Activated naive CD4-positive, alpha-beta T cell treated with anti-CD3 and anti-CD28 coated beads for 36 hours (primary cell): ENCODE measurements at regions of chr1 and their contacts with region 1.

Region 1: DNA sequence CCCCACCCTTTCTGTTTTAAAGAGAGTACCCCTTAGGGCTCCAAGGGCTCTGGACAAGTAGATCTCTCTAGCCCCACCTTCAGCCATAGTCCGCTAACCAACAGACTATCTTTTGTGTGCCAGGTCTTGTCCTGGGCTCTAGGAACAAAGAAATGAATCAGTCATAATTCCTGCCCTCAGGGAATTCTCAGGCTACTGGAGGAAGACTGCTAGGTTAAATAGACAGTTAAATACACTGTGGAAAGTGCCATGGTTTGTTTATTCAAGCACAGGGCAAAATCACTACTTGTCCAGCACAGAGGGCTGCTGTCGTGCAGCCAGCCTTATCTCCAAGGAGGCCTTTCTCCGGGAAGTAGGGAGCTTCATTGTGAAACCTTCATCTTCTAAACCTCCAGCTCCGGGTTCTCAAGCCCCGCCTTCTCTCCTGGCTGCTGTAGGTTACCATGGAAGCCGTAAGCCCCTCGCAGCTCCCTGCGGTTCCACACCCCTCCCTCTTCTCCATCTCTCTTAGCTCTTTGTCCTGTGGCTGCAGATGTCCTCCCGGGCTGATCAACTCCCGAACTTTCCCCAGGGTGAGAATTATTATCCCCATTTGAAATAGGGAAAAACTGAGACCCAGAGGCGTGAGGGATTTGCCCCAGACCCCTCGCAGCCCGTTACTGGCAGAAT is 29.8 kb downstream of the SHISAL2A start:
- DNase-seq: no peak
- H3K4me3 Mint-ChIP-seq: no peak overlapping the region
- H3K27ac Mint-ChIP-seq: peak overlapping the region; percentile 71
- H3K4me1 Mint-ChIP-seq: peaks cover 16% of the 10 kb centered on the region
- H3K27me3 Mint-ChIP-seq: no peaks in the 10 kb centered on the region

Region 2: GRCh38 chr1:52127181-52128180 is 535.3 kb before region 1 on chr1:
- CTCF ChIA-PET with region 1: no interaction called
- intact Hi-C with region 1: loop called (anchors 1 kb)
- DNase-seq: peak; percentile 59
- H3K4me3 Mint-ChIP-seq: no peak overlapping the region
- H3K27ac Mint-ChIP-seq: no peak overlapping the region
- H3K4me1 Mint-ChIP-seq: peaks cover 16% of the 10 kb centered on the region
- H3K27me3 Mint-ChIP-seq: peaks cover 11% of the 10 kb centered on the region

Region 3: GRCh38 chr1:52404116-52404986 is 258.4 kb before region 1 on chr1 and contains the starts of genes ORC1 and PRPF38A:
- CTCF ChIA-PET with region 1: interaction called, 10 read pairs
- intact Hi-C with region 1: loop called (anchors 2 kb)
- DNase-seq: peak; percentile 99
- H3K4me3 Mint-ChIP-seq: peak within 1 kb of the TSS; percentile 100
- H3K27ac Mint-ChIP-seq: peak within 1 kb of the TSS; percentile 99
- H3K4me1 Mint-ChIP-seq: peaks cover 45% of the 10 kb centered on the region
- H3K27me3 Mint-ChIP-seq: no peaks in the 10 kb centered on the region
- total RNA-seq, gene ORC1: 46.9 to 49.3 TPM
- total RNA-seq, gene PRPF38A: 86.0 to 91.8 TPM

Region 4: GRCh38 chr1:52601991-52602855 is 60.6 kb before region 1 on chr1 and contains the start of gene GPX7:
- CTCF ChIA-PET with region 1: interaction called, 3 read pairs
- intact Hi-C with region 1: loop called (anchors 2 kb)
- DNase-seq: peak; percentile 59
- H3K4me3 Mint-ChIP-seq: peak within 1 kb of the TSS; percentile 90
- H3K27ac Mint-ChIP-seq: peak within 1 kb of the TSS; percentile 91
- H3K4me1 Mint-ChIP-seq: peaks cover 38% of the 10 kb centered on the region
- H3K27me3 Mint-ChIP-seq: no peaks in the 10 kb centered on the region
- total RNA-seq, gene GPX7: 20.4 to 20.6 TPM

Region 5: DNA sequence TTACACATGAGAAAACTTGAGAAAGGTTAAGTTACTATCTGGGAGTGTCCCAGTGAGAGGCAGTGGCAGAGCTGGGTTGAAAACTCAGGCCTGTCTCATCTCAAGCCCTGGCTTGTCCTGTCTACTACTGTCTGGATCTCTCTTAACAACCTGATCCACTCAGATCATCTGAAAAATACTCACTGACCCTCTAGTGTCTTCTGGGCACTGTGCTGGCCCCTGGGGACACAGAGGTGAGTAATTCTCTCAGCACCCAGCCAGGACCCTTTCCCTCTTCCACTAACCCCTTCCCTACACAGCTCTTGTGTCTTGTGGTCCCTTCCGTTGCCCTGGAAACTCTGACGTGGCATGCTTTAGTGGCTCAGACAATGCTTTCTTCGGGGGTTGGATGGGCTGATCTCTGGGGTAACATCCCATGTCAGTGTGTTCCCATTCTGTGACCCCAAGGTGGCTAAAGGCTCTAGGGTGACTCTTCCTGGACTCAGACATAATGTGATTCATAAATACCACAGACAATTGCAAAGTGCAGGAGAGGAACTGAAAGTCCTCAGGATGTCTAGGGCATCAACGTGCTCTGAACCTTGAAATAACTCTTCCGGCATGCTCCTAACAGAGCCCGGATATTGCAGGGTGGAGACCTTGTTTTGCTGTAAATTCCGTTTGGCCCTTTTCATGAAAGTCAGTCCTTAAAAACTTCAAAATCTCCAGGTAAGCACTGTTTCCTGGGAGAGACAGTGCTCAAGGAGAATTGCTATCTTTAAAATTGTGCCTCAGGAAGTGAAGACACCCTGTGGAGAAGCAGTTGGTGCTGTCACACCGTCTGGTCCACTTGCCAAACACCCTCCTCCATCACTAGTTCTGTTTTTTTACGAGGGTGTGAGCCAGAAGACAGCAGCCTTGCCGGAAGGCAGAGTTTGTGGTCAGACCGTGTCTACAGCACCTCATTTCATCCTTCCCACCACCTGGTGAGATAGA is 25.8 kb before region 1 on chr1:
- CTCF ChIA-PET with region 1: interaction called, 5 read pairs
- intact Hi-C with region 1: loop called (anchors 1 kb)
- DNase-seq: peak; percentile 84
- H3K4me3 Mint-ChIP-seq: peak overlapping the region; percentile 73
- H3K27ac Mint-ChIP-seq: peak overlapping the region; percentile 98
- H3K4me1 Mint-ChIP-seq: peaks cover 79% of the 10 kb centered on the region
- H3K27me3 Mint-ChIP-seq: no peaks in the 10 kb centered on the region

Region 6: GRCh38 chr1:52697795-52698674 is 35.3 kb after region 1 on chr1 and contains the start of gene COA7:
- CTCF ChIA-PET with region 1: interaction called, 3 read pairs
- intact Hi-C with region 1: loop called (anchors 1 kb)
- DNase-seq: peak; percentile 79
- H3K4me3 Mint-ChIP-seq: peak within 1 kb of the TSS; percentile 93
- H3K27ac Mint-ChIP-seq: peak within 1 kb of the TSS; percentile 78
- H3K4me1 Mint-ChIP-seq: peaks cover 28% of the 10 kb centered on the region
- H3K27me3 Mint-ChIP-seq: no peaks in the 10 kb centered on the region
- total RNA-seq, gene COA7: 11.4 to 11.7 TPM

Region 7: DNA sequence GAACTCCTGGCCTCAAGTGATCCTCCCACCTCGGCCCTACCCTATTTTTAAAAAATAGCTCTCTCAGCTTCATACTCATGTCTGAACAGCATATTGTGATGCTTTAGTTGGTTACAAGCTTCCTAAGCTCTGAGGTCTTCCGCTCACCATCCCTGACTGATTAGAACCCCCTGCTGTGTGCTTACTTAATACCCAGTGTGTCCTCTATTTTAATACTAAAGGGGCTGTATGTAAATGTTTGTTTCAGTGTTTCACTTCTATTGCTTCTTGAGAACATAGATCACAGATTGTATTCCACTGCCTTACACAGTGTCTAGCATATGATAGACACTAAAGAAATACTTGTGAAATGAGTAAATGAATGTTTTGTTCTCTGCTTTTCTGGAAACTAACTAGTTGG is 93.2 kb after region 1 on chr1:
- CTCF ChIA-PET with region 1: no interaction called
- intact Hi-C with region 1: no loop called
- DNase-seq: no peak
- H3K4me3 Mint-ChIP-seq: no peak overlapping the region
- H3K27ac Mint-ChIP-seq: no peak overlapping the region
- H3K4me1 Mint-ChIP-seq: peaks cover 10% of the 10 kb centered on the region
- H3K27me3 Mint-ChIP-seq: no peaks in the 10 kb centered on the region

Region 8: GRCh38 chr1:52769346-52770033 is 106.7 kb after region 1 on chr1:
- CTCF ChIA-PET with region 1: no interaction called
- intact Hi-C with region 1: no loop called
- DNase-seq: no peak
- H3K4me3 Mint-ChIP-seq: no peak overlapping the region
- H3K27ac Mint-ChIP-seq: no peak overlapping the region
- H3K4me1 Mint-ChIP-seq: peaks cover 22% of the 10 kb centered on the region
- H3K27me3 Mint-ChIP-seq: no peaks in the 10 kb centered on the region

Region 9: GRCh38 chr1:53419034-53419433 is 756.3 kb after region 1 on chr1:
- CTCF ChIA-PET with region 1: no interaction called
- intact Hi-C with region 1: no loop called
- DNase-seq: no peak
- H3K4me3 Mint-ChIP-seq: no peak overlapping the region
- H3K27ac Mint-ChIP-seq: no peak overlapping the region
- H3K4me1 Mint-ChIP-seq: peaks cover 5% of the 10 kb centered on the region
- H3K27me3 Mint-ChIP-seq: peaks cover 12% of the 10 kb centered on the region